ENCODE measurements at regions of chrX and their contacts with region 1.

Region 1: GRCh38 chrX:119871599-119872395 is at the starts of genes NDUFA1 and RNF113A:
- DNase-seq: peak; percentile 83

Region 2: GRCh38 chrX:119852382-119853353 is 19.1 kb before region 1 on chrX and contains the start of gene UPF3B:
- CTCF ChIA-PET with region 1: interaction called, 4 read pairs
- POLR2A ChIA-PET with region 1: interaction called, 35 read pairs
- DNase-seq: peak; percentile 99

Region 3: GRCh38 chrX:119887721-119888425 is 16.1 kb after region 1 on chrX:
- CTCF ChIA-PET with region 1: interaction called, 3 read pairs
- POLR2A ChIA-PET with region 1: interaction called, 16 read pairs
- DNase-seq: peak; percentile 93